ENCODE measurements at regions of chr3 and their contacts with region 1.

Region 1: GRCh38 chr3:171459942-171460724 is at the start of gene TNIK:
- DNase-seq: peak; percentile 96 to 98 (median 96)
- ATAC-seq: peak; percentile 89
- H3K4me3 ChIP-seq: peak within 1 kb of the TSS; percentile 57
- H3K27ac ChIP-seq: peak within 1 kb of the TSS; percentile 84
- H3K4me1 ChIP-seq: peaks cover 12 to 33% of the 10 kb centered on the region in 2 experiments
- H3K27me3 ChIP-seq: no peaks in the 10 kb centered on the region
- CTCF ChIP-seq: no peak; a peak in 2 of 6 replicates
- EP300 ChIP-seq: peak; percentile 29; the same call in 1 of the 2 replicates
- POLR2A ChIP-seq: peak; percentile 75
- RAD21 ChIP-seq: peak in 1 of 2 experiments; percentile 8; a peak in 2 of 4 replicates
- polyA plus RNA-seq, gene TNIK: 6.6 to 6.8 TPM

Region 2: DNA sequence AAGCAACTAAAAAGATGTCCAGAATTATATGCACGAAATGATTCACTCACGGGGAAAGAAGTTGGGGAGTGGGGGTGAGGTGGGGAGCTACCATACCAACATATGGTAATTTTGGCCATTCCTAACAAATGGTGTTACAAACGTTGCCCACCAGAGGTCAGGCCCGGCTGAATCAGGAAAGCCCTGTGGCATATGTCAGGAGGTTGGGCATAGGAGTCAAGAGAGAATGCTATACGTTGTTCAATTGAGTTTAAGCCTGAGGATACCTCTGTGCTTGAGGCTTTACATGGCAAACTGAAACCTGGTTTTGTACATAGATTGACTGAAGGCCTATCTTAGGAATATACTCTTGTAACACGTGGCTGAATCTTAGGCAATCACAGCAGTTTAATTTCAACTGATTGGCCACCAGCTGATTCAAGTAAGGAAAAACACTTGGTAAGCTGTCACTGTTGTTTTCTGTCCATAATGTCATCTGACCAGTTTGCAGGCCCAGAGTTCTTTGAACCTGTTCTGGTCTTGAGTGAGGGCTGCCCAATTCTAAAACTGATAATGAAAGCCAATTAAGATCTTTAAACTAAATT is 410.2 kb before region 1 on chr3:
- CTCF ChIA-PET with region 1: interaction called, 3 read pairs
- POLR2A ChIA-PET with region 1: no interaction called
- in situ Hi-C with region 1: no loop called
- intact Hi-C with region 1: loop called (anchors 10 kb)
- DNase-seq: peak; percentile 27 to 65 (median 45)
- ATAC-seq: peak; percentile 94
- H3K4me3 ChIP-seq: no peak overlapping the region
- H3K27ac ChIP-seq: no peak overlapping the region
- H3K4me1 ChIP-seq: no peaks in the 10 kb centered on the region
- H3K27me3 ChIP-seq: 0 out of 5 replicates have a peak, but pooled peaks cover 0 to 2% of the 10 kb centered on the region in 2 experiments
- CTCF ChIP-seq: peak; percentile 72 to 83 (median 78)
- EP300 ChIP-seq: no peak
- POLR2A ChIP-seq: no peak
- RAD21 ChIP-seq: peak; percentile 75 to 90

Region 3: DNA sequence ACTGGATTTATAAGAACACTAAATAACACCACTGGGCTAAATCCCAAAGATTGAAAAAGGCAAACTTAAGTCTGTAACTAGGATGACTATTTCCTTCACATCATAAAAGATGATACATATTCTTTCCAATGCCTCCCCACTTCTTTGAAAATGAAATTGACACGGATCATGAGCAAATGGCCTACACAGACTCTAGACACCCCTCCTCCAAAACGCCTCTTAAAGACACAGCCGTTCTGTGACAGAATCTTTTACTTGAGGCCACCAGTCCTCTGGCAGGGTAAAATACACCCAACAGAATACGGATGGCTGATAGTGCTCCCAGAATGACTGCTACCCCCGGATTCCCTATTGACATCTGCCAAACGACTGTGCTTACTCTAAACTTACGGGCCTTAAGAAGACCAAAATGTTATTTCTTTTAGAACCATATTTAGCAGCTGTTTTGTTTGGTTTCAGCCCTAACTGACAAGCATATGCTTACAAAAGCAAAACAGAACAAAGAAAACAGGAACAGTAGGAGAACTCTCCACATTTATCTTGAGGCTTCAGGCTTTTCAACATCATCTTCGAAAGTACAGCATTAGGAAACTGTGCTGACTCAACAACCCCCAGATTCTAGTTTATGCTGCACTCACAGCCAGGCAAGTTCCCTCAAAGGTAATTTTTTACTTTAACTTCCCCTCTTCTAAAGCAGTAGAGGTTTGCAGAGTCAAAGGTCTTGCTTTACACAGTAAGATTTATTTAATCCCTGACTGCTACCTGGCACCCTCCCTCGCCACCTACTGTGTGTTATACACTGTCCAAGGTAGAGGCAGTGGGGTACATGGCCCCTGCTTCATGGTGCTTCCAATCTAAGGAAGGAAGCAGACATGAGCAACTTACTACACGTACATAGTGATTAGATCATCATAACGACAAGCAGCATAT is 84.2 kb before region 1 on chr3:
- CTCF ChIA-PET with region 1: no interaction called
- POLR2A ChIA-PET with region 1: interaction called, 3 read pairs
- in situ Hi-C with region 1: no loop called
- intact Hi-C with region 1: loop called (anchors 10 kb)
- DNase-seq: peak in 2 of 4 experiments; percentile 22 to 57
- ATAC-seq: peak; percentile 75
- H3K4me3 ChIP-seq: no peak overlapping the region
- H3K27ac ChIP-seq: peak overlapping the region; percentile 47; the same call in 2 of the 3 replicates
- H3K4me1 ChIP-seq: peaks cover 0 to 43% of the 10 kb centered on the region in 2 experiments; a peak in 4 of 5 replicates
- H3K27me3 ChIP-seq: no peaks in the 10 kb centered on the region
- CTCF ChIP-seq: no peak
- EP300 ChIP-seq: peak; percentile 23; the same call in 1 of the 2 replicates
- POLR2A ChIP-seq: no peak
- RAD21 ChIP-seq: peak in 1 of 2 experiments; percentile 19; a peak in 2 of 4 replicates

Region 4: GRCh38 chr3:171514466-171514865 is 54.3 kb after region 1 on chr3:
- CTCF ChIA-PET with region 1: no interaction called
- POLR2A ChIA-PET with region 1: interaction called, 4 read pairs
- in situ Hi-C with region 1: no loop called
- intact Hi-C with region 1: loop called (anchors 5 kb)
- DNase-seq: no peak
- ATAC-seq: no peak
- H3K4me3 ChIP-seq: no peak overlapping the region
- H3K27ac ChIP-seq: no peak overlapping the region
- H3K4me1 ChIP-seq: peaks cover 0 to 16% of the 10 kb centered on the region in 2 experiments; a peak in 3 of 5 replicates
- H3K27me3 ChIP-seq: no peaks in the 10 kb centered on the region
- CTCF ChIP-seq: peak in 1 of 3 experiments; percentile 19; a peak in 1 of 6 replicates
- EP300 ChIP-seq: no peak
- POLR2A ChIP-seq: no peak
- RAD21 ChIP-seq: no peak

Region 5: GRCh38 chr3:171548917-171549316 is 88.8 kb after region 1 on chr3:
- CTCF ChIA-PET with region 1: no interaction called
- POLR2A ChIA-PET with region 1: no interaction called
- in situ Hi-C with region 1: no loop called
- intact Hi-C with region 1: loop called (anchors 5 kb)
- DNase-seq: no peak
- ATAC-seq: no peak
- H3K4me3 ChIP-seq: no peak overlapping the region
- H3K27ac ChIP-seq: no peak overlapping the region
- H3K4me1 ChIP-seq: peaks cover 0 to 3% of the 10 kb centered on the region in 2 experiments; a peak in 1 of 5 replicates
- H3K27me3 ChIP-seq: no peaks in the 10 kb centered on the region
- CTCF ChIP-seq: no peak
- EP300 ChIP-seq: no peak
- POLR2A ChIP-seq: no peak
- RAD21 ChIP-seq: no peak

Region 6: DNA sequence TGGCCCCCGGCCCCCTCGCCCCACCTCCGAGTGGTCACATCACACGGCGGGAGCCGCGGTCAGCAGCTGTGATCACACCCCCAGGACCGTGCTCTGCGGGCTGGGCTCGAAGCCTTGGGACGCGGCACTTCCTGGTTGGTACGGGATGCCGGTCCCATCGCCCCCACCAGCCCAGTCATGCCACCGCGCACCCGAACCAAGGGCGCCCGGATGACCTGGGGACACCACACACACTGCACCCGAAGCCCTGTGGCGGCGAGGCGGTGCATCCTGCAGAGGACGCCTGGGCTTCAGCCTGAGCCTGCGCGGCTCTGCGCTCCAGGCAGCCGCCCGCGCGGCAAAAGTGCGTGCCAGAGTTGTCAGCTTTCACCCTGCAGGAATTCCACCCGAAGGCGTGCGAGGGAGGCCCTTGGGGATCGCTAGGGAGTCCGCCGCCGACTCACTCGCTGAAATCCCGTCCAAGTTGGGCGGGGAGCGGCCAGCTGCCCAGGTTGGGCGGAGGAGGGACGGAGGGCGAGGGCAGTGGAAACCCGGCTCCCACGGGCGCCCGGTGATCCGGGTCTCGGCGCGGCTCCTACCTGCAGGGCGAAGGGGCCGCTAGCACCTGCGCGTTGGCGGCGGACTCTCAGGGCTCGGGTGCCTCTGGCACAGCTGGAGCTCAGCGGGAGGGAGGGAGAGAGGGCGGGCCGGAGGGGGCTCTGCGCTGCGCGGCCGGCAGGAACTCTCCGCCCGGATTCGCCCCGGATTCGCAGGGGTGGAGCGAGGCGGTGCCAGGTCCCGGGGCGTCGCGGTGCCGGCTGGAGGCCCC is 349.9 kb after region 1 on chr3 and contains the start of gene PLD1:
- CTCF ChIA-PET with region 1: no interaction called
- POLR2A ChIA-PET with region 1: interaction called, 5 read pairs
- in situ Hi-C with region 1: no loop called
- intact Hi-C with region 1: loop called (anchors 5 kb)
- DNase-seq: peak; percentile 71 to 88 (median 80)
- ATAC-seq: peak; percentile 83
- H3K4me3 ChIP-seq: peak within 1 kb of the TSS; percentile 81
- H3K27ac ChIP-seq: peak within 1 kb of the TSS; percentile 84
- H3K4me1 ChIP-seq: peaks cover 32 to 53% of the 10 kb centered on the region in 2 experiments
- H3K27me3 ChIP-seq: no peaks in the 10 kb centered on the region
- CTCF ChIP-seq: peak in 1 of 3 experiments; percentile 19; a peak in 1 of 6 replicates
- EP300 ChIP-seq: no peak
- POLR2A ChIP-seq: peak; percentile 36; the same call in 1 of the 2 replicates
- RAD21 ChIP-seq: no peak; a peak in 1 of 4 replicates
- polyA plus RNA-seq, gene PLD1: 25.3 to 26.1 TPM